ENCODE measurements at regions of chr13 and their contacts with region 1.

Region 1: DNA sequence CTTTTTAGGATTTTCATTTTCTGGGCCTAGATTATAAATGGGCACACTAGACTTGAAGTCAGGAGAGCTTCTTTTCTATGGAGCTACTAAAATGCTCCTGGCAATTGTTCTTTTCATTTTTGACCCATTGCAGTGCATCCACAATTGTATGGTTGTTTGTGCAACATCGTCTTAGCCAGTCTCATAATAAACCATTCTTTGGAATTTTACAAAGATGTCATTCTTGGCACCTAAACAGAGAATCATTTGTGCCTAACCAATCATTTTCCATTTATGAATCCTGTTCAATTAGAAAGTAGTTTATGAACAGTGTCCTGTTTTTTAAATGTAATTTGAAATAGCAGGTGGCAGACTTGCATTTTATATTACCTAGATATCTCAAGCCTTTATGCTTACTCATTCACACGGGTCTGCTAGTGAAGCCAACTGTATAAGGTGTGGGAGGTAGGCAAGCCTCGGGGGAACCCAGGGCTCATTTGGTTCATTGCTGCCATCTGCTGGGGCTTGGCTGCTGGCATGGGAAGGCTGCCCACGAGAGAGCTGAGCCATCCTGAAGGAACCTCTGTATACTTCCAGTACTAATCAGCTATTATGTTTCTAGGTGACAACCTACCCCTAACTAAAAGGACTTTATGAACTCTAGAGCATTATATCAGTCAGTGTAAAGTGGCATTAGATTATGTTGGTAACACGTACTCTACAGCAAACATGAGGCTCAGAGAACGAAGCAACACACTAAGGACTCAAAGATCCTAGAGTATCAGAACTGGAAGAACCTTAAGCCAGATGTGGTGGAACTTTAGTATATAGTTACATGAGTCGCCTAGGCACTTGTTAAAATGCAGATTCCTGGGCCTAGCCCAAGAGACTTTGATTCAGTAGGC is 60.0 kb downstream of the TPT1 start:
- DNase-seq: peak; percentile 78
- ATAC-seq: peak; percentile 94
- H3K4me3 ChIP-seq: no peak overlapping the region
- H3K27ac ChIP-seq: no peak overlapping the region
- H3K4me1 ChIP-seq: no peaks in the 10 kb centered on the region
- H3K27me3 ChIP-seq: no peaks in the 10 kb centered on the region
- CTCF ChIP-seq: peak; percentile 89
- POLR2A ChIP-seq: no peak
- RAD21 ChIP-seq: peak; percentile 94

Region 2: DNA sequence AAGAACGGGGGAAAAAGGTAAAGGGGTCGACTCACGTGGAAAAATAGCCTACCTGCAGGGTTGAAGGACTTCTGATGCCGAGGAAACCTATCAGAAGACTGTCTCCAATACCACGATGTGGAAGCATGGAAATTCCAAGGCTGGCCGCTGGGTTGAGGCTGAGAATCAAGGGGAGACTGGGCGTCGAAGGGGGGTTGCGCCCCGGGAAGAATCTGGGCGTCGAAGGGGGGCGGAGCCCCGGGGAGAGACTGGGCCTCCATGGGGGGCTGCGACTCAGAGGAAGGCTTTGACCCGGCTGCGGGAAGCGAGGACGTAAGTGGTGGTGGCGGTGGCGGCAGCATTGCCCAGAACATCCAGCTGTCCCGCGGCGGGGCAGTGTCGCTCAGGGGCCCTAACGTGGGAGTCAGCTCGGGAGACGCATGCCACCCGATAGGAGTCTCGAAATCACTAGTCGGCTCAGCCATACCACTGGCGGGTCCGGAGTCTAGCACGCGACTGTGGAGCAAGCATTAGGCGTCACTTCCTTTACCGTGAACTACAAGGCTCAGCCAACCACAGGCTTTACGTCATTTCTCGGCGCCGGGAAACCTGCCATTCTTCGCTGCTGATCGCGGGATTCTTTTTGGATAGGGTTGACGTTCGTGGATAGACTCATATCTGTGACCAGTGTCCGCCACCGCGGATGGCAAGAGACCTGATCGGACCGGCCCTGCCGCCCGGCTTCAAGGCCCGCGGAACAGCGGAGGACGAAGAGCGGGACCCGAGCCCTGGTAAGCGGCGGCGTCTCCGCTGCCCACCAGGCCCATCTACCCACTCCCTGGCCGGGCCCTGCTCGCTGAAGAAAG is 291.8 kb before region 1 on chr13 and contains the starts of genes GPALPP1 and NUFIP1:
- CTCF ChIA-PET with region 1: no interaction called
- POLR2A ChIA-PET with region 1: no interaction called
- dilution Hi-C with region 1: no loop called
- in situ Hi-C with region 1: no loop called
- intact Hi-C with region 1: loop called (anchors 5 kb)
- DNase-seq: peak; percentile 95
- ATAC-seq: peak; percentile 90
- H3K4me3 ChIP-seq: peak within 1 kb of the TSS; percentile 96
- H3K27ac ChIP-seq: peak within 1 kb of the TSS; percentile 93
- H3K4me1 ChIP-seq: peaks cover 2% of the 10 kb centered on the region
- H3K27me3 ChIP-seq: no peaks in the 10 kb centered on the region
- CTCF ChIP-seq: no peak
- POLR2A ChIP-seq: peak; percentile 86
- RAD21 ChIP-seq: no peak; the same call in 1 of the 2 replicates
- total RNA-seq, gene GPALPP1: 10.6 and 25.3 TPM in 2 replicates
- total RNA-seq, gene NUFIP1: 1.4 and 2.5 TPM in 2 replicates

Region 3: GRCh38 chr13:45055198-45055901 is 225.6 kb before region 1 on chr13:
- CTCF ChIA-PET with region 1: no interaction called
- POLR2A ChIA-PET with region 1: no interaction called
- dilution Hi-C with region 1: no loop called
- in situ Hi-C with region 1: no loop called
- intact Hi-C with region 1: loop called (anchors 2 kb)
- DNase-seq: peak; percentile 93
- ATAC-seq: peak; percentile 87
- H3K4me3 ChIP-seq: no peak overlapping the region
- H3K27ac ChIP-seq: peak overlapping the region; percentile 85
- H3K4me1 ChIP-seq: peaks cover 14% of the 10 kb centered on the region
- H3K27me3 ChIP-seq: no peaks in the 10 kb centered on the region
- CTCF ChIP-seq: no peak
- POLR2A ChIP-seq: no peak
- RAD21 ChIP-seq: no peak

Region 4: DNA sequence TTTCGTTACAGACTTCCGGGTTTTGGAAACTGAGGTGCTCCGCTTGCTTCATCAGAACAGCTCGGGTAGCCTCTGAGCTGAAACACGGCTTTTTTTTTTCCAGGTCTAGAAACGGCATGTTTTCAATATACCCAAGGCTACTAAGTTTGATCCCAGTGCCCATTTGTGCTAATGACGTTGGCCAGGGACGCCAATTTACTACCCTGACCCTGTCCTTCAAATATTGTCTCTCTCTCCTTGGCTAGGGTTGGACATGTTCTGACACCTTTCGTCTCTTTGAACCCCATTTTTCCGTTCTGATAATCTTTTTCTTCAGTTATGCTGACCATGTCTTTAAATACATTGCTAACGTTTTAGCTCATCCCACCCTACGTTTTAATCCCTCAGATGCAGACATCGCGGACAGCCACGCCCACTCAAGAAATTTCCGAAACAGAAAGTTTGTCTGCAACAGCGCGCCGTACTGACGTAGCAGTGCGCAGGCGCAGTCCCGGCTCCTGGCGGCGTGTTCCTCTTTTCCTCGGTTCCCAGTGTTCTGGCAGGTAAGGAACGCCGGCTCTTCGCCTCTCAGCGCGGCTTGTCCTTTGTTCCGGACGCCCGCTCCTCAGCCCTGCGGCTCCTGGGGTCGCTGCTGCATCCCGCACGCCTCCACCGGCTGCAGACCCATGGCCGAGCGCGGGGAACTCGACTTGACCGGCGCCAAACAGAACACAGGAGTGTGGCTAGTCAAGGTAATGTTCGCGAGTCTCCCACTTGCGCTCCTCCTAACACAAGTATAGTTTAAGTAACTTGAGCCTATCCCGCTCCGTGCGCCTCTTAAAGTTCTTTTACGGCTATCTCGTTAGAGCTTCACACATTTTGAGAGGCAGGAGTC is 160.8 kb before region 1 on chr13 and contains the start of gene GTF2F2:
- CTCF ChIA-PET with region 1: no interaction called
- POLR2A ChIA-PET with region 1: no interaction called
- dilution Hi-C with region 1: no loop called
- in situ Hi-C with region 1: no loop called
- intact Hi-C with region 1: loop called (anchors 2 kb)
- DNase-seq: peak; percentile 90
- ATAC-seq: peak; percentile 89
- H3K4me3 ChIP-seq: peak within 1 kb of the TSS; percentile 70
- H3K27ac ChIP-seq: peak within 1 kb of the TSS; percentile 87
- H3K4me1 ChIP-seq: peaks cover 5% of the 10 kb centered on the region
- H3K27me3 ChIP-seq: no peaks in the 10 kb centered on the region
- CTCF ChIP-seq: no peak
- POLR2A ChIP-seq: peak; percentile 72
- RAD21 ChIP-seq: no peak
- total RNA-seq, gene GTF2F2: 16.5 and 35.6 TPM in 2 replicates

Region 5: DNA sequence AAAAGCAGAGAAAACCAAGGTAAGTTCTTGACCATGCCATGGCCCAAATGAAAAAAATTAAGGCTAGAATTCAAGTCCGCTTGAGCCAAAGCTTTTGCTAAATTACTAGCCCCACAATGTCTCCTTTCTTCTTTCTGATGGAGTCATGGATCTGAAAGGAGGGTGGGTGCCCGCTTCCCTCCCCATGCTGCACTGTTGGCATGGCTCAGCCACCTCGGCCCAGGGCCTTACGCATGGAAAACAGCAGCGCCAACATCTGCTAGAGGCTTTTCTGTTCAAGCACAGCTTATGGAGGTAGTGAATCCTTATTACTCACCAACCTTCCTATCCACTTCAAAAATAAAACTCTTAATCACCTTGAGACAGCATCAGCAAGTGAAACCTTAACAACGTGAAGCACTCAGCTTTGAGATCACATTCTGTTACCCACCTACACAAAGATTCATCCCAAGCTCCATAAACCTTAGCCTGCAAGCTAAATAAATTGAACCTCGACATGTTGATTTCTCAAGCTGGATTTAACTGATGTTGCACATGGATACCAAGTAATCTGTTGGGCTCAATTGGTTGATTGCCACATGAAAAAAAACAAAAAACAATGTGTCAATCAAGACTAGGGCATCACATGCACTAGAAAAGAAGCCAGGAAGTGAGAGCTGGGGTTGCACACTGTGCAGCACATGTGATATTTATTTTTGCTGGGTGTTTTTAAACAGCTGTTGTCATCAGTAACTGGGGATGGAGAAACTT is 16.6 kb after region 1 on chr13:
- CTCF ChIA-PET with region 1: no interaction called
- POLR2A ChIA-PET with region 1: interaction called, 14 read pairs
- dilution Hi-C with region 1: no loop called
- in situ Hi-C with region 1: no loop called
- intact Hi-C with region 1: no loop called
- DNase-seq: no peak
- ATAC-seq: no peak
- H3K4me3 ChIP-seq: no peak overlapping the region
- H3K27ac ChIP-seq: no peak overlapping the region
- H3K4me1 ChIP-seq: peaks cover 5% of the 10 kb centered on the region
- H3K27me3 ChIP-seq: no peaks in the 10 kb centered on the region
- CTCF ChIP-seq: no peak
- POLR2A ChIP-seq: no peak
- RAD21 ChIP-seq: no peak

Measured in IMR-90 (cell line).